ENCODE measurements at regions of chr2 and their contacts with region 1.

Region 1: GRCh38 chr2:71510196-71510807 is 56.9 kb downstream of the DYSF start:
- ATAC-seq: peak; percentile 58 to 93 (median 75)
- H3K4me3 ChIP-seq: no peak overlapping the region
- H3K27ac ChIP-seq: no peak overlapping the region
- H3K4me1 ChIP-seq: no peaks in the 10 kb centered on the region

Region 2: GRCh38 chr2:71157124-71157793 is 353.0 kb before region 1 on chr2:
- in situ Hi-C with region 1: loop called in 2 of 9 experiments (anchors 25 kb)
- ATAC-seq: peak; percentile 67 to 84 (median 75)
- H3K4me3 ChIP-seq: no peak overlapping the region
- H3K27ac ChIP-seq: peak overlapping the region in 1 of 2 donors; percentile 42
- H3K4me1 ChIP-seq: peaks cover 15 to 16% of the 10 kb centered on the region in 2 donors

Region 3: GRCh38 chr2:71276311-71277146 is 233.8 kb before region 1 on chr2:
- in situ Hi-C with region 1: loop called in 2 of 9 experiments (anchors 25 kb)
- ATAC-seq: peak; percentile 89 to 97 (median 94)
- H3K4me3 ChIP-seq: peak overlapping the region; percentile 43 to 74 (median 50)
- H3K27ac ChIP-seq: no peak overlapping the region
- H3K4me1 ChIP-seq: no peaks in the 10 kb centered on the region

Region 4: GRCh38 chr2:71299507-71299906 is 210.8 kb before region 1 on chr2:
- in situ Hi-C with region 1: loop called in 3 of 9 experiments (anchors 10 to 25 kb)
- ATAC-seq: no peak
- H3K4me3 ChIP-seq: no peak overlapping the region
- H3K27ac ChIP-seq: no peak overlapping the region
- H3K4me1 ChIP-seq: no peaks in the 10 kb centered on the region

Region 5: DNA sequence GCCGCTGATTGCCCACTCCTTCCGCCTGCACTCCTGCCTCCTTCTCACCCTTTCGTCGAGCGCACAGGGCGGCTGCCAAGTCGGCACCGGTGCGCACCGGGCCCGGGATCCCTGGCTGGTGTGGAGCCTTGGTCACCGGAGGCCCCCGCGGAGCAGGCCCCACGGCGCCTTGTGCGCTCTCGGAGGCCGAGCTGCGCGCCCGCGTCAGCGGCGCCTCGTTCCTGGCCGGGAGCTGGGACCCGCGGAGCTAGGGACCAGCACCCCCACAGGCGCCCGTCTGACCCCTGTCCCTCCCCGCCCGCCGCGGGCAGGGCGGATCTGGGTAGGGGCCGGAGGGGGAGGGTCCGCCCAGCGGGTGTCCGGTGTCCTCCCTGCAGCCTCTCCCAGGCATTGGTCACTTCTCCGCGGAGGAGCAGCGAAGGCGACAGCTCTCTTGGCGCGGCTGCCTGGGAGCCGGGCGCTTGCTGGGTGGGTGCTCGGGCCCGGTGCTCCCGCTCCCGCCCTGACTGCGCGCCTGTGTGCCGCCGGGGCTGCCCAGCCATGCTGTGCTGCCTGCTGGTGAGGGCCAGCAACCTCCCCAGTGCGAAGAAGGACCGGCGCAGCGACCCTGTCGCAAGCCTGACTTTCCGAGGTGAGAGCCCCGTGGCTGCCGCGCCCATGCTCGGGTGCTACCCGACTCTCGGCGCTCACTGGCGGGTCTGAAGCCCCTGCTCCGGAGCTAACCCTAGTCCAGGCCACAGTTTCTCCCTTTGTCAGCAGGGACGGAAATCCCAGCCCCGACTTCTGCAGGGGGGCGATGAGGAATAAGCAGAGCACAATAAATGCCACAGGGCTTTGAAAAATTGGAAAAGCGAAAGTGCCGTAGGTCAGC is 43.8 kb before region 1 on chr2:
- in situ Hi-C with region 1: loop called in 1 of 9 experiments (anchors 10 kb)
- ATAC-seq: peak; percentile 67 to 89 (median 87)
- H3K4me3 ChIP-seq: peak overlapping the region; percentile 31 to 46 (median 39)
- H3K27ac ChIP-seq: no peak overlapping the region
- H3K4me1 ChIP-seq: peaks cover 0 to 7% of the 10 kb centered on the region in 2 donors

Region 6: DNA sequence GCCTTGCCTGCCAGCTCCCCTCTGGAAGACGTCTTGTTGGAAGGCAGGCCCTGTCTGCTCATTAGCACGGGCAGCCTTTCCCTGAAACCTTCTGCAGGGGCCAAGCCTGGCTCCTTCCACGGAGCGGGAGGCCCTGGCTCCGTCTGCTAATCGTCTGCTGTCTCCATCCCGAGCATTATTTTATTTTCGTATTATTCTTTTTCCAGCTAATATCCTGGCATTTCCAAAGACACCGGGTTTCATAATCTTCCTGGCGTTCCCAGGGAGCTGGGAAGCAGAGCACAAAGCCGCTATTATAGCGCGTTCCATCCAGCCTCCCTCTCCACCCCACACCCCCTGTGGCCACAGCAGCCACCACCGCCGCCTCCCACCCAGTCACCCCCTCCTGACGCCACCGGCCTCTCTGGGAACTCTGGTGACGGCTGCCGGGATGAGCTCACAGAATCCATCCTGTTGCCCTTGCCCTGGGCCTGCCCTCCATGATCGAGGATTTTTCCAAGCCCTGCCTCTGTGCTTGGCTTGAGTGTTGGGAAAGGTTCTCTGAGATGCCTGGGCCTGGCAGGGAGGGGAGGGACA is 68.6 kb after region 1 on chr2:
- in situ Hi-C with region 1: no loop called
- ATAC-seq: peak in 4 of 8 experiments; percentile 35 to 63 (median 59)
- H3K4me3 ChIP-seq: no peak overlapping the region
- H3K27ac ChIP-seq: no peak overlapping the region
- H3K4me1 ChIP-seq: peaks cover 0 to 5% of the 10 kb centered on the region in 2 donors

Measured in motor neuron (in vitro differentiated cells).